AG04450 (cell line): ENCODE measurements at regions of chr7 and their contacts with region 1.

Region 1: DNA sequence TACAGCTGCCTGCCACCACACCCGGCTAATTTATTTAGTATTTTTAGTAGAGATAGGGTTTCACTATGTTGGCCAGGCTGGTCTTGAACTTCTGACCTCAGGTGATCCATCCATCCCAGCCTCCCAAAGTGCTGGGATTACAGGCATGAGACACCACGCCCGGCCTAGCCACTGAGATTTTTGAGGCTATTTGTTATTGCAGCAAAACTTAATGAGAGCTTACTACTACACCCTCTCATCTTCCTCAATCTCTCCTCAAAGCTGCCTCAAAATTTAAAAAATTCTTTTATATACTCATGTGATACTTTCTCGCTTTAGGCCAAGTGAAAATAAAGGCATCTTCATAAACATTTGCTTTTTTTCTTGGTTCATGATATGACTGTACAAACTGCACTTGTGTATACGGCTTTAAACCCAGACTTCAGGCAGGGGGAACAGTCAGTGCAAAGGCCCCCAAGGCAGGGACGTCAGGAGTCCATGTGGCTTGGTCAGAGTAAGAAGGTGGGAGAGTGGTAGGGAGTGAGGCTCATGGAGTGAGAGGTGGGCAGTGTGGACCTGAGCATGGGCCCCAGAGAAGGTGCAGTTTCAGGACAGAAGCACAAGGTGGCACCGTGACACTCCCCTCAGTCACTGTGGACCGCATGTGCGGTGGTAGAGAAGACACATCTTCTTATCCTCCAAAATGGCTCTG is 55.5 kb downstream of the SYPL1 start:
- DNase-seq: peak; percentile 26
- H3K4me3 ChIP-seq: no peak overlapping the region
- H3K27ac ChIP-seq: no peak overlapping the region
- H3K27me3 ChIP-seq: peaks cover 13% of the 10 kb centered on the region
- CTCF ChIP-seq: peak; percentile 90

Region 2: GRCh38 chr7:105387621-105388372 is 668.9 kb before region 1 on chr7:
- CTCF ChIA-PET with region 1: no interaction called
- POLR2A ChIA-PET with region 1: interaction called, 14 read pairs
- DNase-seq: no peak
- H3K4me3 ChIP-seq: peak overlapping the region; percentile 74
- H3K27ac ChIP-seq: peak overlapping the region; percentile 39
- H3K27me3 ChIP-seq: no peaks in the 10 kb centered on the region
- CTCF ChIP-seq: no peak

Region 3: GRCh38 chr7:106117786-106118544 is 61.3 kb after region 1 on chr7:
- CTCF ChIA-PET with region 1: no interaction called
- POLR2A ChIA-PET with region 1: no interaction called
- DNase-seq: no peak
- H3K4me3 ChIP-seq: no peak overlapping the region
- H3K27ac ChIP-seq: no peak overlapping the region
- H3K27me3 ChIP-seq: peaks cover 2% of the 10 kb centered on the region
- CTCF ChIP-seq: no peak

Region 4: DNA sequence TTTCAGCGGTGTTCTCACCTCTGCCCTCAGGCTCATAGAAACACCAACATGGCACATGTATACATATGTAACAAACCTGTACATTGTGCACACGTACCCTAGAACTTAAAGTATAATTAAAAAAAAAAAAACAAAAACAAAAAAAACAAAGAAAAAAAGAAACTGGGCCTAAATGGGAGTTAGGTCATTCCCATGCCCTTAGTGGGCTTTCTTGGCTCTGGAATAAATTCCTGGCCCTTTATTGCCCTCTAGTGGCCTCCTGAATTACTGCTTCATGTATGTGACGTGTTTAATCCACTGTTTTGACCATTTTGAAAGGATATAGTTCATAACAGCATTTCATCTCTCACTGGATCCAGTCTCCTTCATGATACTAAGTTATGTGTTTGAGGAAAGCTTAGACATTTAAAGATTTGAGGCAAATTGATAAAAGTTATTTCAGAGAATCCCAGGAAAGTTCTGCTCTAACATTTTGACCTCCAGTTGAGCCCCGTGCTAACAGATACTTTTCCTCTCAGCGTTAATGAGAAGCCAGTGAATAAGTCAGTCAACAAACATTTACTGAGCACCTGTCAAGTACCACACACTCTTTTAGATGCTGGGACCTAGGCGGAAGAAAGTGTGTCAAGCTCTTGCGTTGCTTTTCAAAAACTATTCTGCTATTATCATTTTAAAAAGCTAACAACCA is 110.1 kb after region 1 on chr7:
- CTCF ChIA-PET with region 1: interaction called, 18 read pairs
- POLR2A ChIA-PET with region 1: no interaction called
- DNase-seq: peak; percentile 66
- H3K4me3 ChIP-seq: no peak overlapping the region
- H3K27ac ChIP-seq: no peak overlapping the region
- H3K27me3 ChIP-seq: peaks cover 13% of the 10 kb centered on the region
- CTCF ChIP-seq: peak; percentile 84